H1 (cell line): ENCODE measurements at regions of chr2 and their contacts with region 1.

Region 1: DNA sequence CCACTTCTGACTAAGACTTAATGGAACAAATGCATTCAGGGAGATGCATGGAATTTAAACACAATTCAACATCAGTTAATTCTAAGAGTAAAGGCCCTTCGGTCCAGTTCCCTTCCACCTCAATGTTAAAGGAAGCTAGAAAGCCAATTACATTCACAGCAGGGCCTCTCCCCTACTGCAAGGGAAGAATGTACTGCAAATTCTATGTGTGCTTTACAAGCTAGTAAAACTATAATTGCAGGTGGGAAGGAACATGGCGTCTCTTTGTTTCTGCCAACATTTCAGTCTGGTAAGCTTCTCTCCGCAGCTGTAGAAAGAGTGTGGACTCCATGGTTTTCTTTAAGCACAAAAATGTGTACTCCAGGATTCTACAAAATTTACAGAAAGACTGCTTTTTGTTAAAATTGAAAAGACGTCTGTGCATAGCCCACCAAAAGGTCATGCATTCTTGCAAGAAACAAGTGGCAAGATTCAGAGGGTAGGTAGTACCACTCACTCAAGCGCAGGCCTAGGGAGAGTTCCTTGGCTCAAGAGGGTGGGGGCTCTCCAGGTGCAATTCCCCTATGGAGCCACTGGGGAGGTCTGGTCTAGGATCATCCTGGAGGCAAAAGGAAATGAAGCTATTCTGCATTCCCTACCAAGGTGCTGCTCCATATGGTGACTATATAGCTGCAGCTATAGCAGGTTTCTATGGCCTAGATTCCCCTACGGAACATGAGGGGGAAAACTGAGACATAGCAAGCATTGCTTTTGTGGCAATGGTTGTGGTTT is 127.0 kb upstream of the FZD5 start:
- DNase-seq: peak in 1 of 2 experiments; percentile 36
- H3K4me3 ChIP-seq: peak overlapping the region in 1 of 4 experiments; percentile 24; a peak in 1 of 8 replicates
- H3K27ac ChIP-seq: 0 out of 2 replicates have a peak overlapping the region, but pooled peaks have one; percentile 57
- H3K4me1 ChIP-seq: peaks cover 12 to 37% (median 30%) of the 10 kb centered on the region in 4 experiments
- H3K27me3 ChIP-seq: no peaks in the 10 kb centered on the region
- CTCF ChIP-seq: peak; percentile 46 to 61 (median 49)
- EP300 ChIP-seq: no peak
- POLR2A ChIP-seq: no peak
- RAD21 ChIP-seq: peak; percentile 31 to 50; a peak in 3 of 4 replicates

Region 2: GRCh38 chr2:207529330-207530159 is 367.2 kb before region 1 on chr2 and contains the start of gene CREB1:
- CTCF ChIA-PET with region 1: no interaction called
- POLR2A ChIA-PET with region 1: no interaction called
- DNase-seq: peak; percentile 91 to 100
- H3K4me3 ChIP-seq: peak within 1 kb of the TSS; percentile 71 to 98 (median 98)
- H3K27ac ChIP-seq: peak within 1 kb of the TSS; percentile 98
- H3K4me1 ChIP-seq: peaks cover 0 to 5% (median 2%) of the 10 kb centered on the region in 4 experiments; a peak in 4 of 7 replicates
- H3K27me3 ChIP-seq: peaks cover 0 to 7% (median 5%) of the 10 kb centered on the region in 4 experiments; a peak in 4 of 7 replicates
- CTCF ChIP-seq: peak in 1 of 3 experiments; percentile 9; a peak in 1 of 4 replicates
- EP300 ChIP-seq: no peak
- POLR2A ChIP-seq: peak; percentile 77 to 96; a peak in 2 of 3 replicates
- RAD21 ChIP-seq: 0 out of 4 replicates have a peak, but pooled peaks of 1 of the 2 experiments have one; percentile 0
- total RNA-seq, gene CREB1: 97.4 and 99.0 TPM in 2 replicates

Region 3: DNA sequence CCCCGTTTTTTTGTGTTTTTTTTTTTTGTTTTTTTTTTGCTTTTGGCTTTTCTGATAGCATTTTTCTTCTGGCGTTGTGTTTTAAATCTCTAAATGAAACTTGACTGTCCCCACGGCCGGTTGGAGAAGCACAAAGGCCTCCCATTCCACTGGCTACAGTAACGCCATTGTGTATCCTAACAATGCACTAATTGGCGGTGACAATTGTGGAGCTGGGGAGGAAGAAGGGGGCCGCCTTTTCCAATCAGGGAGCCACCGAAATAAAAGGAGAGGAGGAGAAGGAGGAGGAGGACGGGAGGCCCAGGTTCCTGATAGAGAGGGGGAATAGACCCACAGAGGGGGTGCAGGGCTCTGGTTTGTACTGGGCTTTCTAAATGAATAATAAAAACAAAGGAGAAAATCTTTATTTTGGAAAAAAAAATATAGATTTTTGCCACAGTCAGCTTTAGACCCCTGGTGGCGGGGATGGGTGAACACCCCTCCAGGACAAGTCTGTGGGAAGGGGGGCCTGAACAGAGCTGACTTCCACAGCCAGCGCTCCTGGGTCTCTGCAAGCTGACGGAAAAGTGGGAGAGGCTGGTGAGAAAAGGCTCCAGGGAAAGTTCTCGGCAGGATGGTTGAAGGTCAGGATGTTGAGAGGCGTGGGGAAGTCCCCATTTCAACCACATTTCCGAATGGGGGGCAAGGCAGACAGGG is 83.3 kb before region 1 on chr2:
- CTCF ChIA-PET with region 1: interaction called, 14 read pairs
- POLR2A ChIA-PET with region 1: no interaction called
- DNase-seq: no peak
- H3K4me3 ChIP-seq: peak overlapping the region in 1 of 4 experiments; percentile 31; a peak in 1 of 8 replicates
- H3K27ac ChIP-seq: no peak overlapping the region
- H3K4me1 ChIP-seq: peaks cover 6 to 30% (median 25%) of the 10 kb centered on the region in 4 experiments; a peak in 6 of 7 replicates
- H3K27me3 ChIP-seq: no peaks in the 10 kb centered on the region
- CTCF ChIP-seq: no peak
- EP300 ChIP-seq: no peak
- POLR2A ChIP-seq: no peak
- RAD21 ChIP-seq: no peak

Region 4: DNA sequence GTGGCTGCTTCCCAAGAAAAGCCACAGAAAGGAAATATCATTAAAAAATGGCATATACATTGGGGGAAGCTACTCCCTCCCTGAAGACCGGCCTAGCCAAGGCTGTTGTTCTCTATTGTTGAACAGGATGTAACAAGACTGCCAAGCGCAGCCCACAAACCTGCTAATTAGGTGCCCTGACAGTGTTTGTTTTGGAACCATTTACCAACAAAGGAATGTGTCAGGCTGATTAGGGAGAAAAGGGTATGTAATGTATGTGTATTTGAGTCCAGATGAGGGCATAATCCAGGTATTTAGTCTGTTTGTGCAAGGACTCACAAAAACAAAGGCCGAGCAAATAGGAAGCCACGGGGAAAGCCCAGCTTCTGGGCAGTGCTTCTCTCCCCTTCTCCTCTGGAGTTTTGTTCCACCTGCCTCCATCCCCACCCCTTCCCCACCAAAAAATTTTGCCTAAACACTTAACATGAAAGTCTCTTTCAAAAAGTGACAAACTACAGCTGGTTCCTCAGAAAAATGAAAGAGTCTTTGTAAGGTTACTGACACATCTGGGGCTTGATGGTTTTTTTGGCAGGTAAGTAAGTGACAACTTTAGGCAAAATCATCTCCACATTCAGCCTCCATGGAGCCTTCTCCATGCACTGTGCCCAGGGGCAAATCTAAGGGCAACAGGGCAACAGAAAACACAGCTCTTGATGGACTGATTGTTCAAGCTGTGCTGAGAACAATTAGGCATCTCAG is 48.7 kb before region 1 on chr2:
- CTCF ChIA-PET with region 1: no interaction called
- POLR2A ChIA-PET with region 1: no interaction called
- DNase-seq: no peak
- H3K4me3 ChIP-seq: no peak overlapping the region
- H3K27ac ChIP-seq: no peak overlapping the region
- H3K4me1 ChIP-seq: peaks cover 0 to 5% (median 2%) of the 10 kb centered on the region in 4 experiments; a peak in 2 of 7 replicates
- H3K27me3 ChIP-seq: no peaks in the 10 kb centered on the region
- CTCF ChIP-seq: no peak
- EP300 ChIP-seq: no peak
- POLR2A ChIP-seq: no peak
- RAD21 ChIP-seq: no peak

Region 5: DNA sequence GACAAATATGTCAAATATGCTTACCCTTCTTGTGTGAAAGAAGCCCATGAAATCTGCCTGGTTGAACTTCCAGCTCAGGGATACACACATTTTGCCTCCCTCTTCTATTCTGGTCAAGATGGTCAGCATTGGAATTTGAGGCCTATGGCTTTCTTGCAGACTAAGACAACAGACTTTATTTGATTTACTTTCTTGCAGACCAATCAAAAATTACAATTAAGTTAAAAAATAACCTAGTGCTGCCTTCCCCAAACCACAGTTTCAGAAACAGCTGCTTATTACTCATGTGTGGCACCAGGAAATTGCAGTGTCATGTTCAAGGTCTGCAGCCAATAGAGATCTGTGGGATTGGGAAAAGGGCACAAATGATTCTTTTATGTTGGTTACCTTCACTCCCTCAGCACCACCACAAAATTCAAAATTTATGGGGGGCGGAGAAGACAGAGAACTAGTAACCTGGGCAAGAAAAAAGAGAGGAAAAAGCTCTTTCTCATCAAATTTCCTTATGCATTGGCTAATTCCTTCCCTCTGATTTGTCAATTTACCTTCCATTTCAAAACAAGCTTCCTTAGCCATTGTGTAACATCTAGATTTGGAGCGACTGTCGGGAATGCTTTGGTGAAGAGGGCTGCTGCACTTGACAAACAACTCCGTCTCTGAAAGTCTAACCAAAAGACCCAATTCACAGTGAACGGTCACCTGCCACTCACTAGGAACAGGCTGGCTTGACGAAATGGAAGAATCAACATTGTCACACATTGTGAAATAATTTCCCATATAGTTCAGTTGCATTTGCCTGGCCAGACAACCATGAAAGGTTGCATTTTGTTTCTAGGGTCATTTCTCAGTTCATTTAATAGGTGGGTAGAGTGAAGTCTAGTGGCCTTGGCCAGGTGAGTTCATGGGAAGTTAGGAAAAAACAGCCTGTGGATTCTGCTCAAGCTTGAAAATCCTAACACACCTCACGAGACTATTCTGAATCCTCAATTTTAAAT is 26.6 kb before region 1 on chr2:
- CTCF ChIA-PET with region 1: interaction called, 10 read pairs
- POLR2A ChIA-PET with region 1: no interaction called
- DNase-seq: no peak
- H3K4me3 ChIP-seq: no peak overlapping the region
- H3K27ac ChIP-seq: no peak overlapping the region
- H3K4me1 ChIP-seq: no peaks in the 10 kb centered on the region; a peak in 1 of 7 replicates
- H3K27me3 ChIP-seq: no peaks in the 10 kb centered on the region
- CTCF ChIP-seq: no peak
- EP300 ChIP-seq: no peak
- POLR2A ChIP-seq: no peak
- RAD21 ChIP-seq: no peak

Region 6: GRCh38 chr2:207914716-207915115 is 18.0 kb after region 1 on chr2:
- CTCF ChIA-PET with region 1: interaction called, 19 read pairs
- POLR2A ChIA-PET with region 1: interaction called, 5 read pairs
- DNase-seq: no peak
- H3K4me3 ChIP-seq: no peak overlapping the region
- H3K27ac ChIP-seq: no peak overlapping the region
- H3K4me1 ChIP-seq: no peaks in the 10 kb centered on the region
- H3K27me3 ChIP-seq: no peaks in the 10 kb centered on the region; a peak in 1 of 7 replicates
- CTCF ChIP-seq: no peak
- EP300 ChIP-seq: no peak
- POLR2A ChIP-seq: no peak
- RAD21 ChIP-seq: no peak

Region 7: DNA sequence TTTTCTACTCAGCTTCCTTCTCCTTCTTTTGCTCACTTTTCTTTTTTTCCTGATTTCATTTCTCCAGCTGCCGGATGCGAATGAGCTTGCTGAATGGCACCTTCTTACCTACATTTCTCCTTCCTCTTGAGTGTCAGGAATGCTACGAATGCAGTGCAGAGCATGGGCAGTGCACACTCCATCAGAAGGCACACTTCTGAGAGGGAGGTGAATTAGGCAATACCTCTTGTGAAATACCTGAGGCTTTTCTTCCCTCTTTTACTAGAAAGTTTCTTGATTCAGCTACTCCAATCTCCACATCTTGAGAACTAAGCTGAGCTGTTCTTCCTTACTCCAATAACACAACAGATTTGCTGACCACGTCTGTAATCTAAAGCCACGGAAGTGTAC is 77.5 kb after region 1 on chr2:
- CTCF ChIA-PET with region 1: interaction called, 21 read pairs
- POLR2A ChIA-PET with region 1: interaction called, 5 read pairs
- DNase-seq: no peak
- H3K4me3 ChIP-seq: no peak overlapping the region
- H3K27ac ChIP-seq: no peak overlapping the region
- H3K4me1 ChIP-seq: peaks cover 3 to 28% (median 9%) of the 10 kb centered on the region in 4 experiments; a peak in 5 of 7 replicates
- H3K27me3 ChIP-seq: no peaks in the 10 kb centered on the region
- CTCF ChIP-seq: no peak
- EP300 ChIP-seq: no peak
- POLR2A ChIP-seq: no peak
- RAD21 ChIP-seq: no peak